CD14-positive monocyte (primary cell): ENCODE measurements at regions of chr1 and their contacts with region 1.

Region 1: GRCh38 chr1:149962123-149962548 is 25.5 kb upstream of the MTMR11 start:
- DNase-seq: peak; percentile 69 to 81 (median 80)
- H3K4me3 ChIP-seq: no peak overlapping the region
- H3K4me3 Mint-ChIP-seq: no peak overlapping the region
- H3K27ac ChIP-seq: no peak overlapping the region
- H3K27ac Mint-ChIP-seq: no peak overlapping the region
- H3K4me1 ChIP-seq: peaks cover 8 to 9% of the 10 kb centered on the region in 2 donors
- H3K4me1 Mint-ChIP-seq: peaks cover 11% of the 10 kb centered on the region
- H3K27me3 ChIP-seq: peaks cover 38 to 62% of the 10 kb centered on the region in 2 donors
- H3K27me3 Mint-ChIP-seq: peaks cover 38 to 63% (median 59%) of the 10 kb centered on the region in 3 donors
- CTCF ChIP-seq: peak; percentile 88

Region 2: DNA sequence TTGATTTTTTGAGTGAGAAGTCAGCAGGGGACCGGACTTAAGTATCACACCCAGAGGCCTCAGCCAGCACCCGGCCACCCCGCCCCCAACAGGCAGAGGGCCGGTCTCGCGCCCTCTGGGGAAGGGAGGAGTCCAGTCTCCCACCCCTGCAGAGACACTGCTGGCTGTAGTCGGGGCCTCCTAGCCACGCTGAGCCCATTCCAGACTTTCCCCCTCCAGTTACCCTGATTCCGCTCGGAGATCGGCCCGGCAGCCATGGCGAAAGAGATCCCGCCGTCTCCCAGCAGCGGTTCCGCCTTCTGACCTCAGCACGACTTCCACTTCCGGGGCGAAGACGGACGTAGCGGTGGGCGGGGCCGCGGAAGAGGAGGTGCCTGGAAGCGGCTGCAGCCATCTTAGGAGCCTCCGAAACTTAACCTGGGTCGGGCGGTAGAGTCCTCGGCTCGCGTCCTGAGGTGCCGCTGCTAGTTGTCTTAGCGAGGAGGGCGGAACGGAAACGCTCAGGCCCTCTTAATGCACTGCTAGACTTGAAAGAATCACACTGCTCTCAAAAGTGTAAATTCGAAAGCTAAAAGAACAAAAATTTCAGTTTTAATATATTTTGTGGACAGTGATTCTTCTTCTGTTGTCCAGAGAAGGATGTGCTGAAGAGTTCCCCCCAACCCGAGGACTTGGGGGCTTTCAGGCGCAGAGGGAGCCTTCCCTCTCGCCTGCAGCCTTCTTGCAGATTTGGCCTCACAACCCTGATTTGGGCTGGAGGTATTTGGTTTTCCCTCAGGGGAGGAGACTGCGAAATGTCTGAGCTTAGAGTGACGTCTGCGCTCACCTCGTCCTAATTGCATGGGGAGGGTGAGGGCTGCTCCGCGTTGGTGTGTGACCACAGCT is 34.4 kb before region 1 on chr1 and contains the start of gene SF3B4:
- intact Hi-C with region 1: loop called in 1 of 2 experiments (anchors 2 kb)
- DNase-seq: peak; percentile 92 to 95 (median 93)
- H3K4me3 ChIP-seq: peak within 1 kb of the TSS; percentile 76 to 90 (median 85)
- H3K4me3 Mint-ChIP-seq: peak within 1 kb of the TSS; percentile 93 to 95
- H3K27ac ChIP-seq: peak within 1 kb of the TSS; percentile 95
- H3K27ac Mint-ChIP-seq: peak within 1 kb of the TSS; percentile 92 to 100 (median 98)
- H3K4me1 ChIP-seq: peaks cover 56 to 69% of the 10 kb centered on the region in 2 donors
- H3K4me1 Mint-ChIP-seq: peaks cover 62% of the 10 kb centered on the region
- H3K27me3 ChIP-seq: no peaks in the 10 kb centered on the region
- H3K27me3 Mint-ChIP-seq: peaks cover 0 to 3% (median 0%) of the 10 kb centered on the region in 3 donors
- CTCF ChIP-seq: no peak
- polyA plus RNA-seq, gene SF3B4: 52.2 to 78.6 (median 64.6) TPM

Region 3: GRCh38 chr1:150053926-150054325 is 91.8 kb after region 1 on chr1:
- intact Hi-C with region 1: loop called in 1 of 2 experiments (anchors 5 kb)
- DNase-seq: peak; percentile 62 to 80 (median 79)
- H3K4me3 ChIP-seq: peak overlapping the region in 1 of 3 experiments; percentile 11
- H3K4me3 Mint-ChIP-seq: peak overlapping the region in 1 of 2 donors; percentile 11
- H3K27ac ChIP-seq: peak overlapping the region in 1 of 2 donors; percentile 25
- H3K27ac Mint-ChIP-seq: peak overlapping the region; percentile 10 to 80 (median 59)
- H3K4me1 ChIP-seq: peaks cover 41 to 48% of the 10 kb centered on the region in 2 donors
- H3K4me1 Mint-ChIP-seq: peaks cover 51% of the 10 kb centered on the region
- H3K27me3 ChIP-seq: peaks cover 0 to 7% of the 10 kb centered on the region in 2 donors
- H3K27me3 Mint-ChIP-seq: peaks cover 5 to 16% (median 12%) of the 10 kb centered on the region in 3 donors
- CTCF ChIP-seq: no peak

Region 4: GRCh38 chr1:150162862-150163706 is 200.9 kb after region 1 on chr1:
- intact Hi-C with region 1: loop called in 1 of 2 experiments (anchors 10 kb)
- DNase-seq: peak; percentile 87 to 95 (median 89)
- H3K4me3 ChIP-seq: peak overlapping the region; percentile 35 to 83 (median 42)
- H3K4me3 Mint-ChIP-seq: peak overlapping the region; percentile 82 to 93
- H3K27ac ChIP-seq: peak overlapping the region; percentile 90 to 97
- H3K27ac Mint-ChIP-seq: peak overlapping the region; percentile 95 to 99 (median 99)
- H3K4me1 ChIP-seq: peaks cover 82 to 88% of the 10 kb centered on the region in 2 donors
- H3K4me1 Mint-ChIP-seq: peaks cover 84% of the 10 kb centered on the region
- H3K27me3 ChIP-seq: no peaks in the 10 kb centered on the region
- H3K27me3 Mint-ChIP-seq: no peaks in the 10 kb centered on the region
- CTCF ChIP-seq: no peak